AG04449 (cell line): ENCODE measurements at regions of chr6 and their contacts with region 1.

Region 1: GRCh38 chr6:139375232-139376016 is 976 bp upstream of the CITED2 start:
- DNase-seq: peak; percentile 99
- H3K4me3 ChIP-seq: peak overlapping the region; percentile 93
- CTCF ChIP-seq: no peak

Region 2: GRCh38 chr6:138869398-138869797 is 506.0 kb before region 1 on chr6:
- CTCF ChIA-PET with region 1: no interaction called
- POLR2A ChIA-PET with region 1: no interaction called
- DNase-seq: no peak
- H3K4me3 ChIP-seq: no peak overlapping the region
- CTCF ChIP-seq: no peak

Region 3: GRCh38 chr6:139219271-139219729 is 156.1 kb before region 1 on chr6:
- CTCF ChIA-PET with region 1: interaction called, 5 read pairs
- POLR2A ChIA-PET with region 1: interaction called, 12 read pairs
- DNase-seq: peak; percentile 82
- H3K4me3 ChIP-seq: no peak overlapping the region
- CTCF ChIP-seq: peak; percentile 94

Region 4: GRCh38 chr6:139577763-139578604 is 202.6 kb after region 1 on chr6:
- CTCF ChIA-PET with region 1: no interaction called
- POLR2A ChIA-PET with region 1: interaction called, 32 read pairs
- DNase-seq: peak; percentile 77
- H3K4me3 ChIP-seq: no peak overlapping the region
- CTCF ChIP-seq: no peak

Region 5: GRCh38 chr6:139608466-139609261 is 233.2 kb after region 1 on chr6:
- CTCF ChIA-PET with region 1: no interaction called
- POLR2A ChIA-PET with region 1: interaction called, 12 read pairs
- DNase-seq: no peak
- H3K4me3 ChIP-seq: no peak overlapping the region
- CTCF ChIP-seq: no peak

Region 6: DNA sequence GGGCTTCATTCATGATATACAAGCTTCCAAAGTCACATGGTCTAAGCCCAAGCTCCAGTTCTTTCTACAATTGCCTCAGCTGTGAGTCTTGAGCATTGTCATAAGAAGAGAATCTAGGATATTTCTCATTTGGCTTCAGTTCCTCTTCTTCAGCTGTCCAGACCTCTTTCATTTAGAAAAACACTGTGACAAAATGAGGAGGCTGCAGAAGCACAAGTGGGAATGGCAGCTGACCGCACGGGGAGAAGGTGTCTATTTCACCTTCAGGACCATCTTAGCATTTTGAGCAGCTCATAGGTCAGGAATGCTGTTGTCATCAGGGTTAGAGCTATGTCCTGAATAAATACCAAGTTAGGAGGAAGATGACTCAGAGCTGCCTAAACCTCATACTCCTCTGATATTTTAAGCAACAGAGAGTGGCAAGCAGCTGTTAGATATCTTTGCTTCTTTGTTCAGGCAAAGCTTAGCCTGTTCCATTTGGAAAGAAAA is 389.1 kb after region 1 on chr6:
- CTCF ChIA-PET with region 1: no interaction called
- POLR2A ChIA-PET with region 1: interaction called, 52 read pairs
- DNase-seq: peak; percentile 94
- H3K4me3 ChIP-seq: no peak overlapping the region
- CTCF ChIP-seq: no peak

Region 7: DNA sequence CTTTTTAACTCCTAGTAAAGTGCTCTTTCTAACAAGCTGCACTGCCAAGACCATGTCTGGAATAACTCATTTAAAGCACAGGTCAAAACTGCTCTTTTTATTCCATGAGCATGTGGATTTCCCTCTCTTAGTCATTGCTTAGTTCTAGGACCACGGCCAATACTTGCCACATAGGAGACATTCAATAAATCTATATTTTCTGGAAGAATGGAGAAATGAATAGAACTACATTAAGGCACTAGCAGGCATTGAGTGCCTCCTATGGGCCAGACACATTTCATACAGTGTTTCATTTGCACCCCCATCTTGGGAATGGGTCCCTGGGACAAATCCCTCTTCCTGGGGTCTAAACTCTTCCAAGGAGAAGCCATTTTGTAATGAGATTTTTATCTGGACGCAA is 551.8 kb after region 1 on chr6:
- CTCF ChIA-PET with region 1: interaction called, 4 read pairs
- POLR2A ChIA-PET with region 1: interaction called, 17 read pairs
- DNase-seq: peak; percentile 67
- H3K4me3 ChIP-seq: no peak overlapping the region
- CTCF ChIP-seq: peak; percentile 49

Region 8: GRCh38 chr6:140052756-140053729 is 677.6 kb after region 1 on chr6:
- CTCF ChIA-PET with region 1: no interaction called
- POLR2A ChIA-PET with region 1: interaction called, 54 read pairs
- DNase-seq: no peak
- H3K4me3 ChIP-seq: no peak overlapping the region
- CTCF ChIP-seq: peak; percentile 48